ENCODE measurements at regions of chr9 and their contacts with region 1.

Region 1: DNA sequence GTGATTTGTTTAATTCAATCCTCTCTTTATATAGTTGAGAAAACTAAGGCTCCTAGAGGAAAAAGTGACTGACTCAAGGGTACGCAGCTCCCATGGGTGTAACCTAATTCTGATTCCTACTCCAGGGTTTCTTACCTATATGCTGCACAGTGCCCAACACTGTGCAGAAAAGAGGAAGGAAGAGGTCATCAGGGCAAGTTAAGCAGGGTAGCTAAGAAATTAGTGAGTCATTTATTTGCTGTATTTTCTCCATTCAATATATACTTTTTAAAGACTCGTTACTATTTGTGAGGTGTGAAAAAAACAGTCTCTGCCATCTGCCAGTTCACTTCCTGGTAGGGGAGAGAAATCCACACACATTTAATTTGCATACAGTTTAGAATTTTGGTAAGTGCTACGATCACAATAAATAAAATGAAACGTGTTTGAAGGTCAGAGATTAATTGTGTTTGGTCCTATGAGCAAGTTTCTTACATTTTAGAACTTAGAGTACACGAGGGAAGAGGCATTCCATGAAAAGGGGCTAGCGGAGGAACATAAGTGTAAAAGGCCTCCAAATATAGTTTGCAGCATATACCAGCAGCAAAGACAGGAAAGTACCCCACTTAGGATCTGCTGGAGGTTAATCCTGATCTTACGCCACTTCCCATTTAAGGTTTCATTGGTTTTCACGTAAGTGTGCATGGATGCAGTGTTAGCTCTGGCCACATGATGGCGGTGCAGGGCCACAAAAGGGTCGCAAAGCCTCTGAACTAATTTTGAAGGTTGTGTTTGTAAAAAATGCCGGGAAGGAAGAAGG is 59.9 kb upstream of the TLR4 start:
- DNase-seq: peak; percentile 51 to 83 (median 66)
- ATAC-seq: peak; percentile 47 to 82 (median 76)
- H3K4me3 ChIP-seq: peak overlapping the region in 9 of 12 donors; percentile 9 to 50 (median 36)
- H3K27ac ChIP-seq: peak overlapping the region in 8 of 12 donors; percentile 7 to 59 (median 38)
- H3K4me1 ChIP-seq: peaks cover 0 to 23% (median 4%) of the 10 kb centered on the region in 12 donors
- H3K27me3 ChIP-seq: peaks cover 0 to 48% (median 6%) of the 10 kb centered on the region in 9 donors
- CTCF ChIP-seq: peak in 11 of 12 donors; percentile 92 to 99 (median 96)
- POLR2A ChIP-seq: no peak

Region 2: GRCh38 chr9:117704024-117704575 is 59.8 kb after region 1 on chr9 and contains the start of gene TLR4:
- intact Hi-C with region 1: loop called in 1 of 10 experiments (anchors 10 kb)
- DNase-seq: peak; percentile 74 to 82 (median 77)
- ATAC-seq: peak; percentile 68 to 93 (median 91)
- H3K4me3 ChIP-seq: peak within 1 kb of the TSS; percentile 11 to 72 (median 59)
- H3K27ac ChIP-seq: peak within 1 kb of the TSS; percentile 75 to 95 (median 85)
- H3K4me1 ChIP-seq: peaks cover 0 to 45% (median 12%) of the 10 kb centered on the region in 12 donors
- H3K27me3 ChIP-seq: no peaks in the 10 kb centered on the region
- CTCF ChIP-seq: no peak
- POLR2A ChIP-seq: peak in 1 of 2 donors; percentile 71
- total RNA-seq, gene TLR4: 8.5 to 37.4 (median 11.0) TPM

Region 3: GRCh38 chr9:117782931-117783788 is 138.8 kb after region 1 on chr9:
- intact Hi-C with region 1: loop called in 8 of 10 experiments (anchors 1 to 10 kb)
- DNase-seq: peak; percentile 61 to 71 (median 70)
- ATAC-seq: peak; percentile 80 to 96 (median 94)
- H3K4me3 ChIP-seq: peak overlapping the region in 10 of 12 donors; percentile 29 to 58 (median 49)
- H3K27ac ChIP-seq: peak overlapping the region in 8 of 12 donors; percentile 8 to 78 (median 44)
- H3K4me1 ChIP-seq: peaks cover 0 to 43% (median 12%) of the 10 kb centered on the region in 12 donors
- H3K27me3 ChIP-seq: no peaks in the 10 kb centered on the region
- CTCF ChIP-seq: peak; percentile 49 to 95 (median 80)
- POLR2A ChIP-seq: no peak

Region 4: GRCh38 chr9:117887383-117887782 is 243.1 kb after region 1 on chr9:
- intact Hi-C with region 1: loop called in 1 of 10 experiments (anchors 10 kb)
- DNase-seq: no peak
- ATAC-seq: no peak
- H3K4me3 ChIP-seq: no peak overlapping the region
- H3K27ac ChIP-seq: no peak overlapping the region
- H3K4me1 ChIP-seq: no peaks in the 10 kb centered on the region
- H3K27me3 ChIP-seq: no peaks in the 10 kb centered on the region
- CTCF ChIP-seq: no peak
- POLR2A ChIP-seq: no peak

Region 5: GRCh38 chr9:118809160-118809625 is 1164.9 kb after region 1 on chr9:
- intact Hi-C with region 1: loop called in 1 of 10 experiments (anchors 10 kb)
- DNase-seq: no peak
- ATAC-seq: peak in 1 of 4 donors; percentile 33
- H3K4me3 ChIP-seq: no peak overlapping the region
- H3K27ac ChIP-seq: no peak overlapping the region
- H3K4me1 ChIP-seq: no peaks in the 10 kb centered on the region
- H3K27me3 ChIP-seq: no peaks in the 10 kb centered on the region
- CTCF ChIP-seq: no peak
- POLR2A ChIP-seq: no peak